Motor neuron (in vitro differentiated cells): ENCODE measurements at regions of chr3 and their contacts with region 1.

Region 1: GRCh38 chr3:136728918-136729317 is 23.3 kb downstream of the STAG1 start:
- ATAC-seq: peak; percentile 52 to 87 (median 71)
- H3K4me3 ChIP-seq: no peak overlapping the region
- H3K27ac ChIP-seq: no peak overlapping the region
- H3K4me1 ChIP-seq: no peaks in the 10 kb centered on the region

Region 2: GRCh38 chr3:136326316-136326715 is 402.6 kb before region 1 on chr3:
- in situ Hi-C with region 1: no loop called
- ATAC-seq: no peak
- H3K4me3 ChIP-seq: no peak overlapping the region
- H3K27ac ChIP-seq: no peak overlapping the region
- H3K4me1 ChIP-seq: no peaks in the 10 kb centered on the region

Region 3: GRCh38 chr3:136385457-136385856 is 343.5 kb before region 1 on chr3:
- in situ Hi-C with region 1: loop called in 2 of 9 experiments (anchors 25 kb)
- ATAC-seq: no peak
- H3K4me3 ChIP-seq: no peak overlapping the region
- H3K27ac ChIP-seq: no peak overlapping the region
- H3K4me1 ChIP-seq: no peaks in the 10 kb centered on the region

Region 4: GRCh38 chr3:136559896-136560295 is 169.0 kb before region 1 on chr3:
- in situ Hi-C with region 1: loop called in 1 of 9 experiments (anchors 25 kb)
- ATAC-seq: peak in 1 of 8 experiments; percentile 41
- H3K4me3 ChIP-seq: no peak overlapping the region
- H3K27ac ChIP-seq: no peak overlapping the region
- H3K4me1 ChIP-seq: no peaks in the 10 kb centered on the region

Region 5: DNA sequence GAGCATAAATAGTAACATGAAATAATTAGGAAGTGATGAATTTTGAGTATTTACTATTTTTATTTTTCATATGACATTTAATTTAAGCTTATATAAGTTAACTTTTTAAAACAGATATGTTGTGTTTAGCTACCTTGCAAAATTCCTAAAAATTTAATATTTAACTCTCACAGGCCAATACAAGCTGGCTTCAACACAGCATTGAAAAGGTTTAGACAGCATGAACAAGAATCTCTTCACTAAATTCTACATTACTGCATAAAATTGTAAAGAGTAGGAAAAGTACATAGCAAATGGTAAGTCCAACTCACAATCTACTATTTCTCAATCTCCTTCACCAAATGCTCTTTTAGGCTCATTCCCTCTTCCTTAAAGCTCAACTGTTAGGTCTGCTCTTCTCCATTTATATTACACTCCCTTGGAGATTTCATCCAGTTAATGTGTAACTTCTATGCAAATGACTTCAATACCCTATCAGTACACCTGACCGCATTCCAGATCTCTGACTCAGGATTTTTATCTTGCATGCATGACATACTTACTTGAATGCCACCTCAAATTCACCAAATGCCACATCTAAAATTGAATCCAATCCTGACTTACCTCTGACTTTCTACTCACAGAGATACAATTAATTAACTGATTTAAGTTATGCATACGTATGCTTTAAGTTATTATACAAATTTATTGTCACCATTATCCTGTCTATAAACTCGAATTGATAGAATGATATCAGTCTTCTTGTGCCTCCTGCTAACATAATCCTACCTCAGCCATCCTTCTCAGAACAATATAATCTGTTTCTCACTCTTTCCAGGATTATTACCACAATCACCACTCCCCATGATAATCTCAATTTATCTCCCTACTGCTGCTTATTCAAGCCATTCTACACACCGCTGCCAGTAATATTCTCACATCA is 103.8 kb before region 1 on chr3:
- in situ Hi-C with region 1: loop called in 1 of 9 experiments (anchors 25 kb)
- ATAC-seq: no peak
- H3K4me3 ChIP-seq: no peak overlapping the region
- H3K27ac ChIP-seq: no peak overlapping the region
- H3K4me1 ChIP-seq: no peaks in the 10 kb centered on the region